ENCODE measurements at regions of chr4 and their contacts with region 1.

Region 1: DNA sequence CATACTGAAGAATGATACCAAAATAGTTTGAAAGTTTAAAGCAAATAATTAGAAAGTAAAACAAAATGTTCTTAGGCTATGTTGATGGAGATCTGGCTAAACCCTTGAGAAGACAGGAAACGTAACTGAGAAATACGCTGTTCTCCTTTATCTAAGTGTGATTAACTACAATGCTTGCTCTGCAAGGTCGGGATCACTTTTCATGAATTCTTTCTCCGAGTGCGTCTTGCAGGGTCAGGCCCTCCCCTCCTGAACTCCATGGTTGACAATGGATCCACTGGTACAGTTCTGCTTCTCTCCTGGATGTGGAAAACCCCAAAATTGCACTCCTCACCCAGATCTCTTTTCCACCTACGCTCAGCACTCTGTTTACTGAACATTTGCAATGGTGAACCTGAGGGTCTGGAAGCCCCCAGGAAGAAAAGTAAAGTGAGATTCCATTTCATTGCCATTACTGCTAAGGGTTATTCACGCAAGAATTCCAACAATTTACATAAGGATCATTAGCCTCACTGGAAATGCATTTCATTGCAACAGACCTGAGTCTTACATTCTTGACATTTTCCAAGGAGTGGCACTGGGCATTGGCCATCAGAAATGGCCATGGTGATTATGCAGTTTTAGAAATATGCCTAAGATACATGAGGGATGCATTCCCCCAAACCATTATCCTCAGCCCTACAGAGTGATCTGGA is 24.6 kb upstream of the WWC2 start:
- DNase-seq: peak; percentile 31
- ATAC-seq: no peak; the same call in 2 of the 3 replicates
- H3K4me3 ChIP-seq: no peak overlapping the region; a peak in 1 of 6 replicates
- H3K27ac ChIP-seq: no peak overlapping the region
- H3K4me1 ChIP-seq: peaks cover 63% of the 10 kb centered on the region
- H3K27me3 ChIP-seq: no peaks in the 10 kb centered on the region; a peak in 1 of 5 replicates
- CTCF ChIP-seq: no peak
- EP300 ChIP-seq: no peak
- POLR2A ChIP-seq: no peak
- RAD21 ChIP-seq: no peak

Region 2: GRCh38 chr4:182938205-182938645 is 136.2 kb before region 1 on chr4:
- CTCF ChIA-PET with region 1: no interaction called
- POLR2A ChIA-PET with region 1: no interaction called
- in situ Hi-C with region 1: no loop called
- intact Hi-C with region 1: loop called (anchors 2 kb)
- DNase-seq: peak; percentile 47
- ATAC-seq: peak; percentile 99
- H3K4me3 ChIP-seq: peak overlapping the region in 1 of 3 experiments; percentile 48; a peak in 2 of 6 replicates
- H3K27ac ChIP-seq: no peak overlapping the region
- H3K4me1 ChIP-seq: no peaks in the 10 kb centered on the region
- H3K27me3 ChIP-seq: peaks cover 0 to 3% of the 10 kb centered on the region in 2 experiments; a peak in 1 of 5 replicates
- CTCF ChIP-seq: peak; percentile 96
- EP300 ChIP-seq: no peak
- POLR2A ChIP-seq: no peak
- RAD21 ChIP-seq: peak; percentile 89

Region 3: DNA sequence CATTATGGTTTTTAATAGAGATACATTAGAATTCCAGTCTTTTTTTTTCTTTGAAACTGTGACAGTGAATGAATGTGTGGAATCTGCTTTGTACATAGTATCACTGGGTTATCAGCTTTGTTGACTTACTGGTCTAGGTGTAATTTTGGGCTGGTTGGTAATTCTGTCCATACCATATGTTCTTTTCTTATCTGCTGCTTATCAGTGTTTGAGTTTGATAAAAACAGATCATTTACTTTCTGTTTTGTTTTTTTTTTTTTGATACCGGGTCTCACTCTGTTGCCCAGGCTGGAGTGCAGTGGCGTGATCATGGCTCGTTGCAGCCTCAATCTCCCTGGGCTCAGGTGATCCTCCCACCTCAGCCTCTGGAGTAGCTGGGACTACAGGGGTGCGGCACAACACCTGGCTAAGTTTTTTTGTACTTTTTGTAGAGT is 37.0 kb after region 1 on chr4:
- CTCF ChIA-PET with region 1: no interaction called
- POLR2A ChIA-PET with region 1: no interaction called
- in situ Hi-C with region 1: no loop called
- intact Hi-C with region 1: loop called (anchors 5 kb)
- DNase-seq: peak; percentile 81
- ATAC-seq: peak; percentile 76
- H3K4me3 ChIP-seq: peak overlapping the region; percentile 19 to 56 (median 36); a peak in 4 of 6 replicates
- H3K27ac ChIP-seq: peak overlapping the region; percentile 88
- H3K4me1 ChIP-seq: peaks cover 98% of the 10 kb centered on the region
- H3K27me3 ChIP-seq: no peaks in the 10 kb centered on the region
- CTCF ChIP-seq: no peak
- EP300 ChIP-seq: peak in 1 of 2 experiments; percentile 76; a peak in 2 of 4 replicates
- POLR2A ChIP-seq: no peak
- RAD21 ChIP-seq: no peak

Region 4: DNA sequence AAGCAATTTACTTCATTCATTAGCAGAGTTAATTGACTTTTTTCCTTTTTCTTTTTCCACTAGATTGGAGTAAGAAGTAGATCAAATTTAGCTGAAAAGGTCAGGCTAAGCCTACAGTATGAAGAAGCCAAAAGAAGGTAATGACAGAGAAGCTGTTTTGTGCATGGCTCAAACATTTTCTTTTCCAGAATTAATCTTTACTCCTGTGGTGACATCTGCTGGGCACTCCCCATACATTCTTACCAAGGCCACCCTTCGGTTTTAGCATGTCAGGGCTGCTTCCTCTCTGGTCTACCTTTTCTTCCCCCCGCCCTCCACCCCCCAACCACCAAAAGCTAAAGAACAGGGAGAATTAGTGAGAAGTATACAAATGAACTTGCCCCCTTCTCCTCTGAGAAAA is 175.4 kb after region 1 on chr4:
- CTCF ChIA-PET with region 1: interaction called, 23 read pairs
- POLR2A ChIA-PET with region 1: no interaction called
- in situ Hi-C with region 1: loop called (anchors 5 kb)
- intact Hi-C with region 1: loop called (anchors 1 kb)
- DNase-seq: peak; percentile 16
- ATAC-seq: peak; percentile 64
- H3K4me3 ChIP-seq: no peak overlapping the region
- H3K27ac ChIP-seq: no peak overlapping the region
- H3K4me1 ChIP-seq: no peaks in the 10 kb centered on the region
- H3K27me3 ChIP-seq: no peaks in the 10 kb centered on the region
- CTCF ChIP-seq: peak; percentile 55
- EP300 ChIP-seq: no peak
- POLR2A ChIP-seq: no peak
- RAD21 ChIP-seq: peak; percentile 28; the same call in 1 of the 2 replicates

Region 5: DNA sequence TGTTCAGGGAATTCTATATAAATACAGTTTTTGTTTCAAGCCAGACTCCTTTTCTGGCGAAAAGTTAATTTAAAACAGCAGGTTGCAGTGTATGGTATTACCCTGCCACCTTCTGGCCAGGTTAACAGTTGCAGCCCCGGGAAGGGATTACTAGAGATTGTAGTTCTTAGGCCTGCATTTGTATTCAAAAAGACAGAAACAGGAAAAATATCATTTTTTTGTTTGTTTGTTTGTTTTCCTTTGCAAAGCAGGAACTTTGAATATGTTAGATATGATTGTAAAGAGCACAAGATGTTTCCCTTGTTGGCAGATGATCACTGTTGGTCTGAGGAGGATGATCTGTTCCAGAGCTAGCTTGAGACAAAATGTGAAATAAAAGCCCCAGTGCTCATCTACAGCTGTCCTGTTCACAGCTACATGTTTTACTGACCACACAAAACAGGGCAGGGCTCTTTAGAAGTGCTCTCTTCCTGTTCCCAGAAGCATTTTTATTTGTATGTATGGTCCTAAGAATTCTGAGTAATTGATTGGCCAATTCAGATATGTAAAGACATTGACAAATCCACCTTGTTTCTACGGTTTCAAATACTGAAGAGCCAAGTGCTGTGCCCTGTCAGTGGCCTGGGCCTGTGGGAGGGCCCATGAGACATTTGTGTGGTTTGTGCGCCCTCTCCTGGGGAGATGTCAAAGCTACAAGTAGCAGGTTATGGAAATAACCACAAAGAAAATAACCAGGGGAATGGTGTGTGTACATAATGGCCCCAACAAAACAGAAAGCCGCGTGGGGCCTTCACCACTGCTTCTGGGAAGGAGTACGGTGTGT is 187.7 kb after region 1 on chr4:
- CTCF ChIA-PET with region 1: interaction called, 69 read pairs
- POLR2A ChIA-PET with region 1: interaction called, 4 read pairs
- in situ Hi-C with region 1: loop called (anchors 5 kb)
- intact Hi-C with region 1: loop called (anchors 1 kb)
- DNase-seq: peak; percentile 76
- ATAC-seq: peak; percentile 89
- H3K4me3 ChIP-seq: no peak overlapping the region
- H3K27ac ChIP-seq: peak overlapping the region; percentile 13
- H3K4me1 ChIP-seq: peaks cover 30% of the 10 kb centered on the region
- H3K27me3 ChIP-seq: no peaks in the 10 kb centered on the region
- CTCF ChIP-seq: peak; percentile 89
- EP300 ChIP-seq: 0 out of 4 replicates have a peak, but pooled peaks of 1 of the 2 experiments have one; percentile 10
- POLR2A ChIP-seq: no peak
- RAD21 ChIP-seq: peak; percentile 82